Activated T-helper 1 cell treated with anti-CD3 and anti-CD28 coated beads, Interleukin-12 subunit alpha, Interleukin-12 subunit beta, Interleukin-2, Interleukin-4 antibody, amounts not matched to agents 30 ng/mL and 10 ng/mL and 1 ng/mL, durations not matched to agents 14 hours and 24 hours and 36 hours (primary cell): ENCODE measurements at regions of chr11 and their contacts with region 1.

Region 1: DNA sequence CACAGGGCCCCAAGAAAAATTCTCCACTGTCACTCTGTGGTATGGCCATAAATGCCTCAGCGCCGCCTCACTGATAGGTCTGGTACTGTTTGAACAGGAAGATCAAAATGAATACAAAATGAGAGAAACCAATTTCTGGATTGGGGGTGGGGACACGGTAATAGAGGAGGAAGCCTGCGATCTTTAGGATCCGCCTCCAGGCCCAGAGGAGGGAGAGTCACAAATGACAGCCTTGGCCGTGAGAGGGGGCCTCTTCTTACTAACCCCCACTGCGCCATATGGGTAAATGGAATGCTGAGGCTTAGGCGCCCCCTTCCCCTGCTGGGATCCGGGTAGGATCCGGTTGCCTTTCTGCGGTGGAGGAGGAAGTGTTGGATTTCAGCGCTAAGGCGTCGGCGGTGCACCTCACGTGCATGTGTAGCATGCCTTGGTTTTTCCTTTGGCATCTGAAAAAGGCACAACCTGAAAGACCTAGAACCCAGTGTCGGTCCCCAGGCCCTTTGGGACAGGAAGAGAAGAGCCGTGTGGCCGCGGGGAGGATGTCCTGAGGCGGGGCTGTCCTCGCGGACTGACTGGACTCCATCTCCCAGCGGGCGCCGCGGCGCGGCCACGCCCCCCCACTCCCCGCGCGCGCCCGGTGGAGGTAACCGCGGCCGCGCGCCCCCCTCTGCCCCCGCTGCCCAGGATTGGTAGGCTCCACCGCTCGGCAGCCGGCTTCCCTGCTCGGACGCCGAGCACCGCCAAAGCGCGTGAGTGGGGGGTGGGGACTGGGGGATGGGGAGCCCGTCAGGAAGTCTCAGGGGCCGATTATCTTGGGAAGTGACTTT is 718 bp upstream of the MADD start:
- DNase-seq: peak; percentile 73
- H3K4me3 Mint-ChIP-seq: peak overlapping the region; percentile 81
- H3K27ac Mint-ChIP-seq: peak overlapping the region; percentile 92
- H3K4me1 Mint-ChIP-seq: peaks cover 54% of the 10 kb centered on the region
- H3K27me3 Mint-ChIP-seq: no peaks in the 10 kb centered on the region

Region 2: GRCh38 chr11:46700241-46701077 is 568.8 kb before region 1 on chr11 and contains the starts of genes ARHGAP1 and ZNF408:
- intact Hi-C with region 1: loop called (anchors 5 kb)
- DNase-seq: peak; percentile 98
- H3K4me3 Mint-ChIP-seq: peak within 1 kb of the TSS; percentile 99
- H3K27ac Mint-ChIP-seq: peak within 1 kb of the TSS; percentile 95
- H3K4me1 Mint-ChIP-seq: peaks cover 48% of the 10 kb centered on the region
- H3K27me3 Mint-ChIP-seq: peaks cover 2% of the 10 kb centered on the region
- total RNA-seq, gene ARHGAP1: 69.8 and 71.7 TPM in 2 replicates
- total RNA-seq, gene ZNF408: 12.9 and 13.9 TPM in 2 replicates

Region 3: DNA sequence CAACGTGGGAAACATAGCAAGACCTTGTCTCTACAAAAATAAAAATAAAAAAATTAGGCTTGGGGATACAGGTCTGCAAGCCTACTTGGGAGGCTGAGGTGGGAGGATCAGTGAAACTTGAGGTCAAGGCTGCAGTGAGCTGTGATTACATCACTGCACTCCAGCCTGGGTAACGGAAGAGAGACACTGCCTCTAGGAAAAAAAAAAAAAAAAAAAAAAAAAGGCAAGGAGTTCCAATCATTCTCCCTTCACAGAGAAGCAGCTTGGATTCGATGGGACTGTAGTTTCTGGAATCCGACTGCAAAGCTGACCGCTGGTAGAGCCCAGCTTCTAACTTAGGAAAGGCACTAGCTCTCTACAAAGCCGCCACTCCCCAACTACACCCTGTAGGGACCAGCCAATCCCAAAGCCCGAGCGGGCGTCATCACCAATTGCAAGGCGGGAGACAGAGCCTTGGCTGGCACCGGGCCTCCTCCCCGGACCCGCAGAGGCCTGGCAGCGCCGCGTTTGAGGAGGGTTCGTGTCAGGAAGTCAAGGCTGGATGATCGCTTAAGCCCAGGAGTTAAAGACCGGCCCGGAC is 55.1 kb before region 1 on chr11:
- intact Hi-C with region 1: loop called (anchors 1 kb)
- DNase-seq: peak; percentile 77
- H3K4me3 Mint-ChIP-seq: peak overlapping the region; percentile 96
- H3K27ac Mint-ChIP-seq: peak overlapping the region; percentile 100
- H3K4me1 Mint-ChIP-seq: peaks cover 45% of the 10 kb centered on the region
- H3K27me3 Mint-ChIP-seq: peaks cover 2% of the 10 kb centered on the region

Region 4: DNA sequence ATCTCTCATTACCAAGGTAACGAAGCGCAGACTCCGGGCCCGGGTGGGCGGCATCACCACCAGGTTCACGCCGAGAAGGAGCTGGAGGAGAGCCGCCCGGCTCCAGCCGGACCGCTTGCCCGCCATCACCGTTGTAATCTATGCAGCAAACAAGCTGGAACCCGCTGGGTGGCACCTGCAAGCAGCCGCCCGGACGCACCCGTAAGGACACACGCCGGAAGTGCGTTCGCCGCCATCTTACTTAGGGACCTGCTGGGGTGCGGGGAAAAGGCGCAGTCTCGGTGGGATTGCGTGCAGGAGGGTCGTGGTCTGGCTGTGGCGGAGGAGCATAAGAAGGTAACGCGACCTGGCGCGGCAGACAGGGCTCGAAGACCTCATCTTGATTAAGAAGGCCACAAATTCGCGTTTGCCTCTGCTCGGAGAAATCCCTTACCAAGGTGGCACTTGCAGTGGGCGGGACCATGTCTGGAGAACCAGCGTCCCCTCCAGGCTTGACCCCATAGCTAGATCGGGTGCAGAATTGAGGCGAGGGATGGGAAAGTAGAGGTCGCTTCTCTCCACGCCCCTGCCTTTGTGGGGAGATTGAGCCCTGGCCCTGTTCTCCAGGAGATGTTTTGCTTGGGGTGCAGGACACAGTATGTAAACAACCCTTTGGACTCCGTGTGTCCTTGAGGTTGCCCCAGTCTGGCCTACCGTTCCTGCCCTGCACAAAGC is 20.4 kb before region 1 on chr11 and contains the start of gene ACP2:
- intact Hi-C with region 1: loop called (anchors 1 kb)
- DNase-seq: peak; percentile 82
- H3K4me3 Mint-ChIP-seq: peak within 1 kb of the TSS; percentile 100
- H3K27ac Mint-ChIP-seq: peak within 1 kb of the TSS; percentile 98
- H3K4me1 Mint-ChIP-seq: peaks cover 27% of the 10 kb centered on the region
- H3K27me3 Mint-ChIP-seq: no peaks in the 10 kb centered on the region
- total RNA-seq, gene ACP2: 31.8 and 33.8 TPM in 2 replicates

Region 5: DNA sequence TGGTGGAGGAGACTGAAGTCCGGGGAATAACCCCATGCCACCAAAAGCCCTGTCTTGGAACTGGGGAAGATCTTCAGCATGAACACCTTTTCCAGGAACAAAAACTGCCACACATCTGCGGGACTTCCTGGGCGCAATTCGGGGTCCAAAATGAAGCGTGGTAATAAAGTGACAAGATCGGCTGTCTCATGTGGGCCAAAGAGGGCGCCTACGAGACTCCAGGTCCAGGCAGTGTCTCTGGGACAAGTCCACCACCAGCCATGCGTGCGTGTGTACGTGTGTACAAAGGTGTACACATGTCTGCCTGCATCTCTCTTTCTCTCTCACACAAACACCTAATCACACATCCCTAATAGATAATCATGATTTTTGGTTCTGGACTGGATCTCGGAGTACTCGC is 92.2 kb after region 1 on chr11:
- intact Hi-C with region 1: no loop called
- DNase-seq: no peak
- H3K4me3 Mint-ChIP-seq: no peak overlapping the region
- H3K27ac Mint-ChIP-seq: no peak overlapping the region
- H3K4me1 Mint-ChIP-seq: peaks cover 10% of the 10 kb centered on the region
- H3K27me3 Mint-ChIP-seq: peaks cover 4% of the 10 kb centered on the region

Region 6: GRCh38 chr11:47642099-47642855 is 373.1 kb after region 1 on chr11 and contains the start of gene MTCH2:
- intact Hi-C with region 1: loop called (anchors 1 kb)
- DNase-seq: peak; percentile 95
- H3K4me3 Mint-ChIP-seq: peak within 1 kb of the TSS; percentile 96
- H3K27ac Mint-ChIP-seq: peak within 1 kb of the TSS; percentile 97
- H3K4me1 Mint-ChIP-seq: peaks cover 30% of the 10 kb centered on the region
- H3K27me3 Mint-ChIP-seq: no peaks in the 10 kb centered on the region
- total RNA-seq, gene MTCH2: 116 and 118 TPM in 2 replicates